Adrenal gland (tissue), 19 donors: ENCODE measurements at regions of chr18 and their contacts with region 1.

Region 1: DNA sequence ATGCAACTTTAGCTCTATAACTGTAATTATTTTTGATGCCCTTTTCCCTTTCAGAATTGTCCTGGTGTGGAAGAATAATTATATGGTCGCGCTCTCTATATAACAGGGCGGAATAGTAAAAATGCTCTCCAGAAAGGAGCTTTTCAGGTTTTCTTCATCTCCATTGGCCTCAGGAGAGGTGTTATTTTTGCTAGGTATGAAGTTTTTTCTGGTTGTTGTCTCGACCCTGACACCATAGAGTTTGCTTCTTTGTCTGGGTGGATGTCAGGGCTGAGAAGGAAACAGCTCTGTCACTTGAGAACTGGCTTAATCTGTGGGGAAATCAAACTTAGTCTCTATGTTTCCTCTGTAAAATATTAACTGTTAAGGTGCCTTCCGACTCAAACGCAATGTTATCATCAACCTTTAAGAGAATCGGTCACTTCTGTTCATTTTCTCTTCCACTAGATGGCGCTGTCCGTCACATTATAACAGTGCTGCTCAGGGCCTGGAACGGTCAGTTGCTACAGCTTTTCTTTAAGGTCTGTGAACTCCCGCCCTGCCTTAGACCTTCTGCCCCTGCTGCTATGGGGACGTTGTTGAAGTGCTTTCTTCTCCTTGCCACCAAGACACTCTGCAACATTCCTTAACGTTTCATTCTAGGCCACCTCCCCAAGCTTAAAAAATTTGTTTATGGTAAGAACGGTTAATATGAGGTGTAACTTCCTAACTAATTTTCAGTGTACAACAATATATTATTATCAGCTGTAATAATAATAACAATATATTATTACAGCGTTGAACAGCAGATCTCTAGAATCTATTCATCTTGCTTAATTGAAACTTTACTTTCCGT is 23.8 kb upstream of the SERPINB12 start:
- DNase-seq: peak; percentile 51 to 82 (median 70)
- H3K4me3 ChIP-seq: no peak overlapping the region
- H3K27ac ChIP-seq: no peak overlapping the region
- H3K4me1 ChIP-seq: no peaks in the 10 kb centered on the region
- H3K27me3 ChIP-seq: peaks cover 14% of the 10 kb centered on the region
- CTCF ChIP-seq: peak; percentile 76 to 87 (median 84)
- POLR2A ChIP-seq: no peak

Region 2: DNA sequence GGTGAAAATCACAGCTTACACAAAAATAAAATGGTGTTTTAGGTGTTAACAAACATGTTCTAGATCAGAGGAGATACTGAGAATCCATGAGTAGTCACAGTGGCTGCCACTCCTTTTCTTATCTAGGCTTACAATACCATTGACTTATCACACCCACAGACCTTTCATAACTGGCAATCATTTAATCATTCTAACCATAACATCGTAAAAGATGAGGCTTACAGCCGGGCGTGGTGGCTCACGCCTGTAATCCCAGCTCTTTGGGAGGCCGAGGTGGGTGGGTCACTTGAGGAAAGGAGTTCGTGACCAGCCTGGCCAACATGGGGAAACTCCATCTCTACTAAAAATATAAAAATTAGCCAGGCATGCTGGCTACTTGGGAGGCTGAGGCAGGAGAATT is 60.4 kb before region 1 on chr18:
- intact Hi-C with region 1: no loop called
- DNase-seq: no peak
- H3K4me3 ChIP-seq: no peak overlapping the region
- H3K27ac ChIP-seq: no peak overlapping the region
- H3K4me1 ChIP-seq: peaks cover 0 to under 1% of the 10 kb centered on the region in 2 donors
- H3K27me3 ChIP-seq: no peaks in the 10 kb centered on the region
- CTCF ChIP-seq: no peak
- POLR2A ChIP-seq: no peak

Region 3: DNA sequence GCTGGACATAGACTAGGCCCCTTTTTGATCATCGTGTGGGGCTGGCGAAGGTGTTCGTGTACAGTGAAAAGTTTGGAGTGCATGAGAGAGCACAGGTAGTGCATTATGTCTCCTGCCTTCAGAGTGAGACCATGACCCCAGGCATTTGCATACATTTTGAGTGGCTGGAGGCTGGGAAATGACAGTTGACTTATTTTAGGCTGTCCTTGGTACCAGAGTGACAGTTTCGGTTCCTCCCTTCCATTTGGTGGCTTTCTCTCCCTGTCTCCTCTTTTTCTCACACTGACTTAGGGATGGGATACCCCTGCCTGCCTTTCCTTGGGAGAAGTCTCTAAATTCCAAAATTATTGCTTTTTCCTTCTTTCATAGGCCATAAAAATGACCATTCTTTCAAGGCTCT is 43.9 kb after region 1 on chr18:
- intact Hi-C with region 1: loop called in 1 of 2 experiments (anchors 10 kb)
- DNase-seq: no peak
- H3K4me3 ChIP-seq: no peak overlapping the region
- H3K27ac ChIP-seq: no peak overlapping the region
- H3K4me1 ChIP-seq: no peaks in the 10 kb centered on the region
- H3K27me3 ChIP-seq: no peaks in the 10 kb centered on the region
- CTCF ChIP-seq: no peak
- POLR2A ChIP-seq: no peak

Region 4: DNA sequence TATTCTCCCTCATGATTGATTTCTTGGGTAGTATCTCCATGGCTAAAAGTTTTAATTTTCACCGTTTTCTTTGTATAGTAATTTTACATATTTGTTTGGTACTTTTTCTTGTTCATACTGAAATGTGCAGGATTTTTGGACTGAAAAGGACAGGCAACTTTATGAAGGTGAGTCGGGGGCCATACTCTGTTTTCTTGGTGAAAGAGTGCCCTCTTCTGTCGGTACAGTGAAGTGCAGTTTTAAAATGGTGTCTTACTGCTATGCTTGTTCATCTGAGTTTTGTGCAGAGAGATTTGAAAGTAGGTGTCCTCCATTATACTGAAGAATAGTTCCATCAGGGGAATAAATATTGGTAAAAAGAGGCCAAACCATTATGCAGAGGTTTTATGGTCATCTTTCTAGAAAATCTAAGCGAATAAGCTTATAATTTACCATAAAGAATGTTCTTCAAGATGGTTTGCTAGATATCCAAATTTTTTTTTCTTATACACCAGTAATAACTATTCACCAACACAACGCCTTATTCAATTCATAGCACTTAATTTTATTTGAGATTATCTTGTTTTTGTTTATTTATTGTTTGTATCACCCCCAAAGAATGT is 60.1 kb after region 1 on chr18:
- intact Hi-C with region 1: loop called in 1 of 2 experiments (anchors 5 kb)
- DNase-seq: peak in 3 of 7 donors; percentile 18 to 51 (median 37)
- H3K4me3 ChIP-seq: no peak overlapping the region
- H3K27ac ChIP-seq: no peak overlapping the region
- H3K4me1 ChIP-seq: no peaks in the 10 kb centered on the region
- H3K27me3 ChIP-seq: peaks cover 7% of the 10 kb centered on the region
- CTCF ChIP-seq: peak; percentile 53 to 94 (median 74)
- POLR2A ChIP-seq: no peak

Region 5: DNA sequence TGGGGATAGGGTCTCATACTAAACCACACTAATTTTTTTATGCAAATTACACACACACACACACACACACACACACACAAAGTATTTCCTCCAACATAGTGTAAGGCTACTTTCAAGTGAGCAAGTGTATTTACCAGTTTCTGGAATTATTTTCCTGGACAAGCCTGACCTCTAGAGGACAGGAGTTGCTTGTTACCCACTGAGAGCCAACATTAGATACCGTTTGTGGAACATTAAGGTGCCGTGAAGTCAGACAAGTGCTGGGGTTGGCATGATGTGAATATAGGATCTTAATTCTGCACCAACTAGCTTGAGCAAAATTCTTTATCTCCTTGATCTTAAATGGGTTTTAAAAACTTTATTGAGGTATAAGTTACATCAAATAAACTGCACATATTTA is 329.8 kb after region 1 on chr18:
- intact Hi-C with region 1: loop called in 1 of 2 experiments (anchors 10 kb)
- DNase-seq: no peak
- H3K4me3 ChIP-seq: no peak overlapping the region
- H3K27ac ChIP-seq: no peak overlapping the region
- H3K4me1 ChIP-seq: no peaks in the 10 kb centered on the region
- H3K27me3 ChIP-seq: no peaks in the 10 kb centered on the region
- CTCF ChIP-seq: peak; percentile 22 to 44 (median 42)
- POLR2A ChIP-seq: no peak